ENCODE measurements at regions of chr19 and their contacts with region 1.

Region 1: DNA sequence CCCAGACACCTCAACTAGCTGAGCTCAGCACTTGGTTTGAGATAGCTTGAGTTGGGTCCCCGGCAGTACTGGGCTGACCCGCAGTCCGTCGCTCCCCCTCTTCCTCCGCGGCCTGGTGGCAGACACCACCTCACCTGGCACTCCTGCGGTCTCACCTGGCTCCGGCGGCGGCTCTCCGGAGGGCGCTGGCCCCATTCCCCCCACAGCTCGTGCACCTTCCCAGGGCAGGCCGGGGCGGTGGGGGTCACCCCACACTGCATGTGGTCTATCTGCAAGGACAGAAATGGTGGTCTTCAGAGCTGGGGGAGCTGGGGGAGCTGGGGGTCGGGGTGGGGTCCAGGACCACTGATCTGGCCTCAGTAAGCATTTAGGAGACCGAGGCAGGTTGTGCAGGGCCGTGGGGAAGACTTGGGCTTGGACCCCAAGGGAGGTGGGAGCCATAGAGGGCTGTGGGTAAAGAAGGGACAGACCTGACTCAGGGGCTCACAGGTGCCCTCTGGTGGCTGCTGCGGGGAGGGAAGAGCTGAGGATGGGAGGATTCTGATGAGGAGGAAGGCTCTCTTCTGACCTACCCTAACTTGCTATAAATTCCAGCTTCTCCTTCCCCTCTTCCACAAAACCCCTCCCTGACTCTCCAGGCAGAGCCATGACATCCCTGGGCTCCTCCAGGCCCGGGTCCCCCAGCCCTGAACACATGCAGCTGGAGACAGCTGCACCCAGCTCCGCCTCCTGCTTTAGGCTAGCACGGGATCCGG is 6.7 kb upstream of the PLIN4 start:
- DNase-seq: peak; percentile 67
- ATAC-seq: peak; percentile 63
- H3K4me3 ChIP-seq: no peak overlapping the region
- H3K4me3 Mint-ChIP-seq: no peak overlapping the region
- H3K27ac ChIP-seq: no peak overlapping the region
- H3K27ac Mint-ChIP-seq: no peak overlapping the region
- H3K4me1 ChIP-seq: no peaks in the 10 kb centered on the region
- H3K4me1 Mint-ChIP-seq: no peaks in the 10 kb centered on the region
- H3K27me3 ChIP-seq: no peaks in the 10 kb centered on the region
- H3K27me3 Mint-ChIP-seq: peaks cover 4% of the 10 kb centered on the region
- CTCF ChIP-seq: peak; percentile 74

Region 2: DNA sequence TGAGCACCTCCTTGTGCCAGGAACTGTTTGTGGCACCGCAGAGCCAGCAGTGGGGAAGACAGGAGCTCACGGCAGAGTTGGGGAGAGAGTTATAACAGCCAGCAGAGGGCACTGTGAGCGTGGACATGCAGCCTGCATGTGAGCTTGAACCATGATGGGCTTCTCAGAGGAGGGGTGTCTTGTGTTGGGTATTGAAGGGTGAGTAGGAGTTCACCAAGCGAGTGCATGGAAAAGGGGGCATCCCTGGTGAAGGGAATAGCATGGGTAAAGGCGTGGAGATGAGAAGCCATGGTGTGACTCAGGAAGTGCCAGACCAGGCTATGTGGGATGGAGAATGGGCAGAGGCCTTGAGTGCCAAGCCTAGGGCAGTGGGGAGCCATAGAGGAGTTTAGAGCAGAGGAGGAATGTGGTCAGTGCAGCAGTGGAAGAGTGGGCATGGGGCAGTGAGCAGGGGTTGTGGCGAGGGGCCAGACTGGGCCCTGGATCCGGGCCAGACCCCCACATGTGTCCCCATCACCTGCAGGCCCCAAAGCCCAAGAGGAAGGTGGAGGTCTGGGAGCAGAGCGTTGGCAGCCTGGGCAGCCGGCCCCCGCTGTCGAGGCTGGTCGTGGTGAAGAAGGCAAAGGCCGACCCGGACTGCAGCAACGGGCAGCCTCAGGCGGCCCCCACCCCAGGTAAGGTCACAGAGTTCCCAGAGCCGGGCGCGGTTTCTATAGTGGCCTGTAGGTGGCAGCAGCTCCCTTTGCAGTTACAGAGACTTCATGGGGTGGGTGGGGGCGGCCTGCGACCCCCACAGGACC is 257.7 kb before region 1 on chr19:
- CTCF ChIA-PET with region 1: interaction called, 89 read pairs
- POLR2A ChIA-PET with region 1: no interaction called
- intact Hi-C with region 1: no loop called
- DNase-seq: peak; percentile 70
- ATAC-seq: peak; percentile 79
- H3K4me3 ChIP-seq: no peak overlapping the region
- H3K4me3 Mint-ChIP-seq: no peak overlapping the region
- H3K27ac ChIP-seq: no peak overlapping the region
- H3K27ac Mint-ChIP-seq: peak overlapping the region; percentile 37
- H3K4me1 ChIP-seq: peaks cover 0 to 11% of the 10 kb centered on the region in 2 donors
- H3K4me1 Mint-ChIP-seq: peaks cover 12% of the 10 kb centered on the region
- H3K27me3 ChIP-seq: no peaks in the 10 kb centered on the region
- H3K27me3 Mint-ChIP-seq: no peaks in the 10 kb centered on the region
- CTCF ChIP-seq: peak; percentile 84

Region 3: DNA sequence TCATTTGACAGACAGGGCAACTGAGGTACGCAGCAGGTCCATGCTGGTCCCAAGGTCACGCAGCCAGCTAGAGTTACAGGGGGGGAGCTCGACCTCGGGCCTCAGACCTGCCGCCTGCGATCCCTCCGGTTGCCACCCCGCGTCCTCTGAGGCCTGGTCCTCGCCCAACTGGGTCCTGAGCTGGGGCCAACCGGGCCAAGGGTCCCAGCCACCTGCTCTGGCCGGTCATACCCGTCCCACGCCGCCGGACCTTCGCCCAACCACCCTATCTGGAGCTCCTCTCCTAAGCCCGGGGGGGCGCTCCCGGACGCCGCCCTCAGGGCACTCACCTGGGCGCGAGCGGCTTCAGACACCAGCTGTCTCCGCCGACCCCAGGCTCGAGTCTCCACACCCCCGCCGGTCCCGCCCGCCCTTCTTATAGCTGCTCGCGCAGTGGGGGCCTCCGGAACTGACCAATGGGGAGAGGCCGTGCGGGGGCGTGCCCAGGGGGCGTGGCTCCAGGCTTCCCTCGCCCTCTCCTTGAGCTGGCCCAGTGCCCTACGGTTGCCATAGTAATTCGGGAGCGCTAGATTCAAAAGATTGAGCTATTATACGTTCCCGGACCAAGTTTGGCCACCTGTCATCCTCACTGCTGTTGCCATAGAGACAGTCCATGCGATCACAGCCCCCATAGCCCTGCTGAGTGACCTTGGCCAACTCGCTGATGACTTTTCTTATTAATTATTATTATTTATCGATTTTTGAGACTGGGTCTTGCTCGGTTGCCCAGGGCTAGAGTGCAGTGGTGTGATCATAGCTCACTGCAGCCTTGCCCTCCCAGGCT is 10.1 kb after region 1 on chr19 and contains the start of gene PLIN5:
- CTCF ChIA-PET with region 1: interaction called, 25 read pairs
- POLR2A ChIA-PET with region 1: interaction called, 8 read pairs
- intact Hi-C with region 1: no loop called
- DNase-seq: peak; percentile 51
- ATAC-seq: peak; percentile 66
- H3K4me3 ChIP-seq: peak within 1 kb of the TSS in 3 of 5 experiments; percentile 7 to 9 (median 8)
- H3K4me3 Mint-ChIP-seq: peak within 1 kb of the TSS; percentile 44
- H3K27ac ChIP-seq: no peak within 1 kb of the TSS
- H3K27ac Mint-ChIP-seq: no peak within 1 kb of the TSS
- H3K4me1 ChIP-seq: peaks cover 11 to 17% of the 10 kb centered on the region in 2 donors
- H3K4me1 Mint-ChIP-seq: peaks cover 9% of the 10 kb centered on the region
- H3K27me3 ChIP-seq: peaks cover 0 to 36% (median 7%) of the 10 kb centered on the region in 4 experiments
- H3K27me3 Mint-ChIP-seq: peaks cover 17% of the 10 kb centered on the region
- CTCF ChIP-seq: no peak
- total RNA-seq, gene PLIN5: 0.15 and 1.00 TPM in 2 replicates